ENCODE measurements at regions of chr2 and their contacts with region 1.

Region 1: GRCh38 chr2:69436938-69437750 is at the start of gene NFU1:
- DNase-seq: peak; percentile 94
- ATAC-seq: peak; percentile 97
- H3K4me3 Mint-ChIP-seq: peak within 1 kb of the TSS; percentile 93
- H3K27ac Mint-ChIP-seq: peak within 1 kb of the TSS; percentile 96
- H3K4me1 Mint-ChIP-seq: peaks cover 29% of the 10 kb centered on the region
- H3K27me3 Mint-ChIP-seq: no peaks in the 10 kb centered on the region; the same call in 1 of the 2 replicates
- CTCF ChIP-seq: peak; percentile 28; the same call in 1 of the 2 replicates
- total RNA-seq, gene NFU1: 39.3 to 47.8 TPM (median 46.1 TPM) in 3 replicates

Region 2: DNA sequence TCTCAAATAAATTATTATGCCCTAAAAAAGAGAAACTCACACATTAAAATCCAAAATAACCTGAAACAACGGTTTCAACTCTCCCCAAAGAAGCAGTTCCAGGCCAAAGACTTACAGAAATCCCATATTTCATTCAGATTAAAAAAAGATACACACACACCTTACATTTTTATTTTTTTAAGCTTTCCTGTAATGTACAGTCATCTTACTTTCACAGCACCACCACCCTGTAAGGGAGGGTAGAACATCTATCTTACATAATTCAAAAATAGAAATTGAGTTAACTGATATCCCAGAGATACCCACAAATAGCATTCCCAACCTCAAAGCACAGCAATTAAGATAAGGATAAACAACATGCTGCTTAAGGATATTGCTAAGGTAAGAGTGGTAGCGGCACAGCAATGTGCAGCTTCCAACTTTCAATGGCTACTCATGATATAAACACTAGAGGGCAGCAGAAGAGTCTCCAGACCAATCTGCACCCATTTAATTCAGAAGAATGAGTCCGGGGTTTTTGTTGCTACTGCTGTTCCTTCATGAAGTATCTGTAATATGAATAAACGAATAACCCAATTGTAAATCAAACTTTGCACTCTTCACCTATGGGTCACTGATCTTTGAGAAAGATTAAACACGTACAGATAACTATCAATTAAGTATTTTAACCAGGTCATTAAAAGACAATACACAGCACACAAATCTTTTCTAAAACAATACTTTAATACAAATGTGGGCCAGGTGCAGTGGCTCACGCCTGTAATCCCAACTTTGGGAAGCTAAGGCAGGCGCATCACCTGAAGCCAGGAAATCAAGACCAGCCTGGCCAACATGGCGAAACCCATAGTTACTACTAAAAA is 61.4 kb before region 1 on chr2:
- CTCF ChIA-PET with region 1: interaction called, 17 read pairs
- POLR2A ChIA-PET with region 1: interaction called, 3 read pairs
- DNase-seq: no peak
- ATAC-seq: peak; percentile 80
- H3K4me3 Mint-ChIP-seq: no peak overlapping the region
- H3K27ac Mint-ChIP-seq: peak overlapping the region; percentile 79; the same call in 1 of the 2 replicates
- H3K4me1 Mint-ChIP-seq: peaks cover 9% of the 10 kb centered on the region
- H3K27me3 Mint-ChIP-seq: no peaks in the 10 kb centered on the region
- CTCF ChIP-seq: peak; percentile 38

Region 3: GRCh38 chr2:69525261-69525660 is 88.1 kb after region 1 on chr2:
- CTCF ChIA-PET with region 1: interaction called, 12 read pairs
- POLR2A ChIA-PET with region 1: interaction called, 3 read pairs
- DNase-seq: no peak
- ATAC-seq: peak; percentile 20; the same call in 1 of the 2 replicates
- H3K4me3 Mint-ChIP-seq: no peak overlapping the region
- H3K27ac Mint-ChIP-seq: peak overlapping the region; percentile 78
- H3K4me1 Mint-ChIP-seq: peaks cover 15% of the 10 kb centered on the region
- H3K27me3 Mint-ChIP-seq: no peaks in the 10 kb centered on the region
- CTCF ChIP-seq: no peak